ENCODE measurements at regions of chr2 and their contacts with region 1.

Region 1: DNA sequence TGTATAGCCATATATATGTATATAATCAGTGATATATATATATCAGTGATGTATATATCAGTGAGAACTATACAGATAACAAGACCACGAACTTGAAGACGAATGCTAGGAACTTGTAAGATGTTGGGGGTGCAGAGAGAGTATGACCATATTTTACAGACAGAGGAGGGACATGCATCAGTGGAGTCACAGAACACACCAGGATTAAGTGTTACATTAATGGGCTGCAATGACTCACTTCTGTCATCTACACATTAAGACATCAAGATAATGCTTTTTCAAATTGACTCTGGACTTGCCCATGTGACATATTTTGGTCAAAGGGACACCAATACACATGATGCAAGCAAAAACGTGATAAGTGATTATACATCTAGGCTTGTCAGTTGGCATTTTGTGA is 501.0 kb downstream of the LRRTM4 start:
- DNase-seq: no peak
- ATAC-seq: no peak
- H3K4me3 Mint-ChIP-seq: no peak overlapping the region
- H3K27ac Mint-ChIP-seq: no peak overlapping the region
- H3K4me1 Mint-ChIP-seq: no peaks in the 10 kb centered on the region
- H3K27me3 Mint-ChIP-seq: no peaks in the 10 kb centered on the region

Region 2: GRCh38 chr2:76288146-76288545 is 733.0 kb before region 1 on chr2:
- CTCF ChIA-PET with region 1: no interaction called
- POLR2A ChIA-PET with region 1: no interaction called
- intact Hi-C with region 1: loop called in 1 of 2 experiments (anchors 5 kb)
- DNase-seq: no peak
- ATAC-seq: no peak
- H3K4me3 Mint-ChIP-seq: no peak overlapping the region
- H3K27ac Mint-ChIP-seq: no peak overlapping the region
- H3K4me1 Mint-ChIP-seq: no peaks in the 10 kb centered on the region
- H3K27me3 Mint-ChIP-seq: no peaks in the 10 kb centered on the region